Ovary (tissue), 10 donors: ENCODE measurements at regions of chr19 and their contacts with region 1.

Region 1: GRCh38 chr19:6632002-6632621 is 37.8 kb downstream of the TNFSF14 start:
- DNase-seq: peak in 4 of 5 donors; percentile 40 to 79 (median 64)
- H3K4me3 ChIP-seq: no peak overlapping the region
- H3K27ac ChIP-seq: no peak overlapping the region
- H3K4me1 ChIP-seq: no peaks in the 10 kb centered on the region
- H3K27me3 ChIP-seq: no peaks in the 10 kb centered on the region
- CTCF ChIP-seq: peak; percentile 63 to 79 (median 78)
- EP300 ChIP-seq: no peak
- POLR2A ChIP-seq: no peak

Region 2: DNA sequence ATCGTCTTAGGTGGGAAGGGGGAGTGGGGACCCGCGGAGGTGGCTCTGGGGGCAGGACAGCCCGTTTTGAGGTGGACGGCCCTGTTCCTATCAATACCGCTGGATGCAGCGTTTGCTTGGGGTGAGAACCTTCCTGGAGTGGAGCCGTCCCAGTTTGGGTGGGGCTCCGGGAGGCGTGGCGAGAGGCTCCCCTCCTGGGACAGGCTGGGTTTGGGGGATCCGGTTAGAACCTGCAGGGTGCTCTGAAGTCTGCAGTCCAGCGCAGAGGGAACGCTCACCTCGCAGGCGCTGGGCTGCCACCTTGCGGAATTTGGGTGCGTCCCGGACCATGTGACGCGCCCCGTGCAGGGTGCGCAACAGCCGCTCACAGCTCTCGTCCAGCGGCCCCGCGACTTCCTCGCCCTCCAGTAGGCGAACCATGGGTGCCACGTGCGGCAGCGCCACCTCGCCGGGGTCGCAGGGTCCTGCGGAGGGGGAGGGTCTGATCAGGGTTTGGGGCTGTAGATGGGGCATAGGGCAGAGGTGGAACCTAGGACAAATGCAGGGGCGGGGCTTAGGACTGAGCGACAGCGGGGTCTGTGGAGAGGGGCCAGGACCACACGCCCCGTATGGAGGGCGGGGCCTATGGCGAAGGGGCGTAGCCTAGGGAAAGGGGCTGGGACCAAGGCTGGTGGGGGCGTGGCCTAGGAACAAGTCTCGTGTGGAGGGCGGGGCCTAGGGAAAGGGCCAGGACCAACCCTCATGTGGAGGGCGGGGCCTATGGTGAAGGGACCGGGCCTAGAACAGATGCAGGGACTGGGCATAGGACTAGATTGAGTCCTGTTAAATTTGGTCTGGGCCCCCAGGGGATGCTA is 121.3 kb after region 1 on chr19:
- intact Hi-C with region 1: loop called in 2 of 4 experiments (anchors 10 kb)
- DNase-seq: peak; percentile 87 to 90 (median 89)
- H3K4me3 ChIP-seq: peak overlapping the region; percentile 13
- H3K27ac ChIP-seq: peak overlapping the region in 1 of 2 donors; percentile 13
- H3K4me1 ChIP-seq: peaks cover 2% of the 10 kb centered on the region
- H3K27me3 ChIP-seq: no peaks in the 10 kb centered on the region
- CTCF ChIP-seq: peak in 2 of 3 donors; percentile 72 to 73
- EP300 ChIP-seq: no peak
- POLR2A ChIP-seq: no peak

Region 3: DNA sequence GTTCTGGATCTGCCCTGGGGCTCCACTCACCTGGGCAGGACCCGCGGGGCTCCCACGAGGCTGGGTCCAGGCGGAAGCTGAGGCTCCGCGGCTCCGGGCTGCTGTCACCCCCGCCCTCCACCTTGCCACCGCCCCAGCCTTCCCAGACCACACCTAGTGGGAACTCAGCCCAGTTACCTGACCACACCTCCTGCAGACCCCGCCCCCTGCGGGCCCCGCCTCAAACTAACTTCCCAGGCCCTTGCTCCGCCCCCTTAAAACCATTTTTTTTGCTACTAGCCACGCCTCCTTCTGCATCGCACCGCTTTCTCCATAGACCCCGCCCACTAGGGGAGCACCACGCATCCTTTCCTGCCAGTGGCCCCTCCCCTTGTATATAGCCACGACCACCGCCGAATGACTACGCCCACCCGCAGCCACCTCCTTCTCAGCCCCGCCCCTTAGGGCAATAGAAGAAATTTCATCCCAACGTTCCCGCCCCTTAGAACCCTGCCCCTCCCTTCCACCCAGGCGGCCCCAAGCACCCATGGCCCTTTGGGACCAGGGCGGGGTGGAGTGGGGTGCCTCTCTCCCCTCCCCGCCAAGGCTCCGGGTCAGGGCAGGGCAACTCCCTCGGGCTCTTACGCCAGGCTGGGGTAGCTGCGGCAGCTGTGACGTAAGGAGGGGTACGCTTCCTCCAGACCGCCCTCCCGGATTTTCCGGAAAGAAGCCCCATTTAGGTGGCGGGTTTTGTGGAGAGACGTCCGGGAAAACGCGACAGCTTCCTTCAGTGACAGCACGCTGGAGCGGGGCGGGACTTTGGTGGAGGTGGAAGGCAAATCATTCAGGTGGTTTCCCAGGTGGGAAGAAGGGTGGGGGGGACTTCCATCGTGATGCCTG is 135.5 kb after region 1 on chr19 and contains the start of gene SH2D3A:
- intact Hi-C with region 1: loop called in 1 of 4 experiments (anchors 10 kb)
- DNase-seq: peak in 1 of 5 donors; percentile 37
- H3K4me3 ChIP-seq: no peak within 1 kb of the TSS
- H3K27ac ChIP-seq: no peak within 1 kb of the TSS
- H3K4me1 ChIP-seq: peaks cover 2% of the 10 kb centered on the region
- H3K27me3 ChIP-seq: peaks cover 8% of the 10 kb centered on the region
- CTCF ChIP-seq: no peak
- EP300 ChIP-seq: no peak
- POLR2A ChIP-seq: no peak
- total RNA-seq, gene SH2D3A: 0.18 to 18.3 (median 1.6) TPM

Region 4: DNA sequence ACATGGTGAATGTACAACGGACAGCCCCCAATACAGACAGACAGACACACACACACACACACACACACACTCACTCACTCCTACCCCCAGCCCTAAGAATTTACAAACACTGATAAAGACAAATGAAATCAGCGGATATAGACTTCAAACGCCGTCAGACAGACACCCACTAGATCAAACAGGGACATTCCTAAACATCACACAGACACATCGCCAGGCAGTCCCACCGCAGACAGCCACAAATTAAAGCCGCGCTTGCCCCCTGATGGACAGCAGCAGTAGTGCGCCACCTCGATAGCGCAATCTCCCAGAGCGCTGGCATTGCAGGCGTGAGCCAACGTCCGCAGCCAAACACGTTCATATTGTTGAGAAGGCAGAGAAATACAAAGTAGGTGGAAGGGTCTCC is 230.6 kb after region 1 on chr19:
- intact Hi-C with region 1: loop called in 3 of 4 experiments (anchors 5 to 10 kb)
- DNase-seq: peak; percentile 44 to 78 (median 56)
- H3K4me3 ChIP-seq: no peak overlapping the region
- H3K27ac ChIP-seq: no peak overlapping the region
- H3K4me1 ChIP-seq: no peaks in the 10 kb centered on the region
- H3K27me3 ChIP-seq: no peaks in the 10 kb centered on the region
- CTCF ChIP-seq: peak; percentile 36 to 54 (median 51)
- EP300 ChIP-seq: no peak
- POLR2A ChIP-seq: no peak